IMR-90 (cell line): ENCODE measurements at regions of chr5 and their contacts with region 1.

Region 1: GRCh38 chr5:138575194-138576015 is at the start of gene HSPA9:
- DNase-seq: peak; percentile 100
- ATAC-seq: peak; percentile 91
- H3K4me3 ChIP-seq: peak within 1 kb of the TSS; percentile 76
- H3K27ac ChIP-seq: peak within 1 kb of the TSS; percentile 98
- H3K4me1 ChIP-seq: no peaks in the 10 kb centered on the region
- H3K27me3 ChIP-seq: no peaks in the 10 kb centered on the region
- CTCF ChIP-seq: no peak
- POLR2A ChIP-seq: peak; percentile 98
- RAD21 ChIP-seq: 0 out of 2 replicates have a peak, but pooled peaks have one; percentile 6
- total RNA-seq, gene HSPA9: 456 and 472 TPM in 2 replicates

Region 2: GRCh38 chr5:138752951-138753793 is 177.8 kb after region 1 on chr5 and contains the start of gene CTNNA1:
- CTCF ChIA-PET with region 1: no interaction called
- POLR2A ChIA-PET with region 1: no interaction called
- dilution Hi-C with region 1: no loop called
- in situ Hi-C with region 1: no loop called
- intact Hi-C with region 1: loop called (anchors 2 kb)
- DNase-seq: peak; percentile 49
- ATAC-seq: peak; percentile 91
- H3K4me3 ChIP-seq: peak within 1 kb of the TSS; percentile 95
- H3K27ac ChIP-seq: peak within 1 kb of the TSS; percentile 93
- H3K4me1 ChIP-seq: peaks cover 8% of the 10 kb centered on the region
- H3K27me3 ChIP-seq: no peaks in the 10 kb centered on the region
- CTCF ChIP-seq: no peak
- POLR2A ChIP-seq: peak; percentile 92
- RAD21 ChIP-seq: no peak
- total RNA-seq, gene CTNNA1: 395 and 471 TPM in 2 replicates

Region 3: GRCh38 chr5:138981586-138981985 is 406.2 kb after region 1 on chr5:
- CTCF ChIA-PET with region 1: no interaction called
- POLR2A ChIA-PET with region 1: no interaction called
- dilution Hi-C with region 1: no loop called
- in situ Hi-C with region 1: no loop called
- intact Hi-C with region 1: no loop called
- DNase-seq: no peak
- ATAC-seq: no peak
- H3K4me3 ChIP-seq: no peak overlapping the region
- H3K27ac ChIP-seq: no peak overlapping the region
- H3K4me1 ChIP-seq: peaks cover 9% of the 10 kb centered on the region
- H3K27me3 ChIP-seq: no peaks in the 10 kb centered on the region
- CTCF ChIP-seq: no peak
- POLR2A ChIP-seq: no peak
- RAD21 ChIP-seq: no peak

Region 4: GRCh38 chr5:139774980-139775661 is 1199.7 kb after region 1 on chr5:
- CTCF ChIA-PET with region 1: no interaction called
- POLR2A ChIA-PET with region 1: interaction called, 10 read pairs
- dilution Hi-C with region 1: no loop called
- in situ Hi-C with region 1: no loop called
- intact Hi-C with region 1: no loop called
- DNase-seq: peak; percentile 68
- ATAC-seq: peak; percentile 99
- H3K4me3 ChIP-seq: no peak overlapping the region
- H3K27ac ChIP-seq: no peak overlapping the region
- H3K4me1 ChIP-seq: no peaks in the 10 kb centered on the region
- H3K27me3 ChIP-seq: peaks cover 35% of the 10 kb centered on the region
- CTCF ChIP-seq: peak; percentile 65
- POLR2A ChIP-seq: no peak
- RAD21 ChIP-seq: peak; percentile 36